ENCODE measurements at regions of chr7 and their contacts with region 1.

Region 1: DNA sequence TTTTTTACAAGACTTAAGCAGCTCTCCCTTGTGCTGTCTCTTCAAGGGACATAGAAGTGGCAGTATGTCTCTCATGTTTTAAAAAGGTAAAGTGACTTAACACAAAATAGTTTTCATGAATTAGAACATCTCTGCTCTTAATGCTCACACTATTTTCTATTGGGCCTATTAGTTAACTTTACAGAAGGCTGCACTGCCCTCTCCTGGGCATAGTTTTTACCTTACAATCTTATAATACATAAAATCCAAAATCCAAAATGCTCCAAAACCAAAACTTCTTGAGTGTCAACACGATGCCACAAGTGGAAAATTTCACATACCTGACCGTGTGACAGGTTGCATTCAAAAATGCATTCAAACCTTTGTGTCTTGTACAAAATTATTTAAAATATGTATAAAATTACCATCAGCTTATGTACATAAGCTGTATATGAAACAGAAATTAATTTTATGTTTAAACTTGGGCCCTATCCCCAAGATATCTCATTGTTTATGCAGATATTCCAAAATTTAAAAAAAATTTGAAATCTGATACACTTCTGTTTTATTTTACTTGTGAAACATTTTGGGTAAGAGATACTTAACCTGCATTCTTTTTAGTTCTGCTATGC is 25.8 kb downstream of the TES start:
- DNase-seq: no peak
- H3K4me3 ChIP-seq: no peak overlapping the region
- H3K27me3 ChIP-seq: no peaks in the 10 kb centered on the region
- CTCF ChIP-seq: peak; percentile 51

Region 2: DNA sequence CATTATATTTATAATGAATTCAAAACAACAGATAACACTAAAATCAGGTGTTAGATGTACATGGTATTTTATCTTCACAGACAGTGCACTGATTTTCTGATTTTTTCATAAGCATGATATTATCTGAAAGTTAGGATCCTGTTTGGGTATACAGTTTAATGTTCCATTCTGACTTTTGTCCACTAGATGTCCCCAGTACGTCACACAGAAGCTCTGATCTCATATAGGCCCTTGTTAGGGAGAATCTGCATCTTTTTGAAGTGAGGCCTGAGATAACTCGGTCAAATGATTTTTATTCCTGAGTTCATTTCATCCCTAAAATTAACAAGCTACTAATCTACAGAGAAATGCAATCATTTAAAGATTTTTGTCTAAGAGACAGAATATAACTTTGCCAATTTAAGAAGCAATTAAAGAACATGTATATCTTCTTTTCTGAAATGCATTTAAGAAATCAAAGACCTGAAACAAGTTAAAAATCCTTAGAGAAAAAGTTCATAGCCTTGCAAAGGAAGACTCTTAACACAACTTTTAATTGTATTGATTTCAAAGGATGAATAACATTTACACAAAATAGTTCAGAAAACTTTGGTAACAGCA is 97.8 kb before region 1 on chr7:
- CTCF ChIA-PET with region 1: interaction called, 16 read pairs
- POLR2A ChIA-PET with region 1: no interaction called
- DNase-seq: peak; percentile 17
- H3K4me3 ChIP-seq: no peak overlapping the region
- H3K27me3 ChIP-seq: no peaks in the 10 kb centered on the region
- CTCF ChIP-seq: peak; percentile 73

Region 3: GRCh38 chr7:116173051-116174028 is 62.8 kb before region 1 on chr7:
- CTCF ChIA-PET with region 1: interaction called, 192 read pairs
- POLR2A ChIA-PET with region 1: no interaction called
- DNase-seq: no peak
- H3K4me3 ChIP-seq: no peak overlapping the region
- H3K27me3 ChIP-seq: no peaks in the 10 kb centered on the region
- CTCF ChIP-seq: peak; percentile 34; the same call in 1 of the 2 replicates

Region 4: DNA sequence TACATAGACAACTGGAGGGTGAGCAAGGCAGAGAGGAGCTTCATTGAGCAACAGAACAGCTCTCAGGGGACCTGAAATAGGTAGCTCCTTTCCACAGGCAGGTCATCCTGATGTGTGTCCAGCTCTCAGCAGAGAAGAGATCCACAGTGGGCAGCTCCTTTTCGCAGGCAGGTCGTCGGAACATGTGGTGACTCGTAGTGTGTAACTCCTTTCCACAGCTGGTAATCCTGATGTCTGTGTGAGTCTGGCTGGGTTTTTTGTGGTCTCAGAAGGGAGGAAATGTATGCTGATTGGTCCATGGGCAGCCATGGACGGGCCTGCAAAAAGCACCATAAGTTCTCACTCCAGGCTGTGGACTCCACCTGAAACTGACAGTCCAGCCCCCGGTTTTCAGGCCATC is 50.2 kb before region 1 on chr7:
- CTCF ChIA-PET with region 1: interaction called, 192 read pairs
- POLR2A ChIA-PET with region 1: no interaction called
- DNase-seq: no peak
- H3K4me3 ChIP-seq: no peak overlapping the region
- H3K27me3 ChIP-seq: no peaks in the 10 kb centered on the region
- CTCF ChIP-seq: no peak

Region 5: GRCh38 chr7:116249708-116250553 is 13.8 kb after region 1 on chr7:
- CTCF ChIA-PET with region 1: interaction called, 18 read pairs
- POLR2A ChIA-PET with region 1: no interaction called
- DNase-seq: no peak
- H3K4me3 ChIP-seq: no peak overlapping the region
- H3K27me3 ChIP-seq: no peaks in the 10 kb centered on the region
- CTCF ChIP-seq: peak; percentile 67

Measured in BJ (cell line).